Mammary epithelial cell (primary cell): ENCODE measurements at regions of chrX and their contacts with region 1.

Region 1: GRCh38 chrX:70554081-70554480 is 109.4 kb downstream of the DLG3 start:
- DNase-seq: peak; percentile 7
- H3K4me3 ChIP-seq: no peak overlapping the region
- H3K27ac ChIP-seq: no peak overlapping the region
- H3K4me1 ChIP-seq: no peaks in the 10 kb centered on the region
- H3K27me3 ChIP-seq: no peaks in the 10 kb centered on the region
- CTCF ChIP-seq: peak in 1 of 2 donors; percentile 28

Region 2: GRCh38 chrX:70087857-70088630 is 466.0 kb before region 1 on chrX:
- CTCF ChIA-PET with region 1: no interaction called
- dilution Hi-C with region 1: no loop called
- in situ Hi-C with region 1: no loop called
- intact Hi-C with region 1: no loop called
- DNase-seq: no peak
- H3K4me3 ChIP-seq: no peak overlapping the region
- H3K27ac ChIP-seq: no peak overlapping the region
- H3K4me1 ChIP-seq: no peaks in the 10 kb centered on the region
- H3K27me3 ChIP-seq: no peaks in the 10 kb centered on the region
- CTCF ChIP-seq: no peak

Region 3: GRCh38 chrX:70454441-70455365 is 99.4 kb before region 1 on chrX:
- CTCF ChIA-PET with region 1: no interaction called
- dilution Hi-C with region 1: no loop called
- in situ Hi-C with region 1: no loop called
- intact Hi-C with region 1: loop called (anchors 1 kb)
- DNase-seq: peak; percentile 77
- H3K4me3 ChIP-seq: peak overlapping the region; percentile 47 to 63 (median 58)
- H3K27ac ChIP-seq: no peak overlapping the region
- H3K4me1 ChIP-seq: peaks cover 12% of the 10 kb centered on the region
- H3K27me3 ChIP-seq: no peaks in the 10 kb centered on the region
- CTCF ChIP-seq: peak; percentile 87 to 89

Region 4: DNA sequence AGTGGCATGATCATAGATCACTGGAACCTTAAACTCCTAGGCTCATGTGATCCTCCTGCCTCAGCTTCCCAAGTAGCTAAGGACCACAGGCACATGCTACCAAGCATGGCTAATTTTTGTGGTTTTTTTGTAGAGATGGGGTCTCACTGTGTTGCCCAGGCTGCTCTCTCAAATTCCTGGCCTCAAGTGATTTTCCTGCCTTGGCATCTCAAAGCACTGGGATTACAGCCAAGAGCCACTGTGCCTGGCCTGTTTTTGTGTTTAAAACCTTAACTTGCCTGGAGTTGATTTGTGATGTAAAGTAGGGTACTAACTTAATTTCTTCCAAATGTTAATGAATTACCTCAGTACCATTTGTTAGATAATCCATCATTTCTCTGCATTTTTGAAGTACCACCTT is 87.1 kb before region 1 on chrX:
- CTCF ChIA-PET with region 1: no interaction called
- dilution Hi-C with region 1: no loop called
- in situ Hi-C with region 1: no loop called
- intact Hi-C with region 1: no loop called
- DNase-seq: no peak
- H3K4me3 ChIP-seq: no peak overlapping the region
- H3K27ac ChIP-seq: no peak overlapping the region
- H3K4me1 ChIP-seq: no peaks in the 10 kb centered on the region
- H3K27me3 ChIP-seq: no peaks in the 10 kb centered on the region
- CTCF ChIP-seq: no peak

Region 5: GRCh38 chrX:70508296-70508911 is 45.7 kb before region 1 on chrX:
- CTCF ChIA-PET with region 1: no interaction called
- dilution Hi-C with region 1: loop called (anchors 5 kb)
- in situ Hi-C with region 1: no loop called
- intact Hi-C with region 1: no loop called
- DNase-seq: no peak
- H3K4me3 ChIP-seq: no peak overlapping the region
- H3K27ac ChIP-seq: no peak overlapping the region
- H3K4me1 ChIP-seq: no peaks in the 10 kb centered on the region
- H3K27me3 ChIP-seq: no peaks in the 10 kb centered on the region
- CTCF ChIP-seq: no peak

Region 6: GRCh38 chrX:70970482-70970995 is 416.5 kb after region 1 on chrX:
- CTCF ChIA-PET with region 1: no interaction called
- dilution Hi-C with region 1: no loop called
- in situ Hi-C with region 1: no loop called
- intact Hi-C with region 1: no loop called
- DNase-seq: peak; percentile 7
- H3K4me3 ChIP-seq: no peak overlapping the region
- H3K27ac ChIP-seq: no peak overlapping the region
- H3K4me1 ChIP-seq: no peaks in the 10 kb centered on the region
- H3K27me3 ChIP-seq: no peaks in the 10 kb centered on the region
- CTCF ChIP-seq: peak; percentile 28 to 29